ENCODE measurements at regions of chr14 and their contacts with region 1.

Region 1: DNA sequence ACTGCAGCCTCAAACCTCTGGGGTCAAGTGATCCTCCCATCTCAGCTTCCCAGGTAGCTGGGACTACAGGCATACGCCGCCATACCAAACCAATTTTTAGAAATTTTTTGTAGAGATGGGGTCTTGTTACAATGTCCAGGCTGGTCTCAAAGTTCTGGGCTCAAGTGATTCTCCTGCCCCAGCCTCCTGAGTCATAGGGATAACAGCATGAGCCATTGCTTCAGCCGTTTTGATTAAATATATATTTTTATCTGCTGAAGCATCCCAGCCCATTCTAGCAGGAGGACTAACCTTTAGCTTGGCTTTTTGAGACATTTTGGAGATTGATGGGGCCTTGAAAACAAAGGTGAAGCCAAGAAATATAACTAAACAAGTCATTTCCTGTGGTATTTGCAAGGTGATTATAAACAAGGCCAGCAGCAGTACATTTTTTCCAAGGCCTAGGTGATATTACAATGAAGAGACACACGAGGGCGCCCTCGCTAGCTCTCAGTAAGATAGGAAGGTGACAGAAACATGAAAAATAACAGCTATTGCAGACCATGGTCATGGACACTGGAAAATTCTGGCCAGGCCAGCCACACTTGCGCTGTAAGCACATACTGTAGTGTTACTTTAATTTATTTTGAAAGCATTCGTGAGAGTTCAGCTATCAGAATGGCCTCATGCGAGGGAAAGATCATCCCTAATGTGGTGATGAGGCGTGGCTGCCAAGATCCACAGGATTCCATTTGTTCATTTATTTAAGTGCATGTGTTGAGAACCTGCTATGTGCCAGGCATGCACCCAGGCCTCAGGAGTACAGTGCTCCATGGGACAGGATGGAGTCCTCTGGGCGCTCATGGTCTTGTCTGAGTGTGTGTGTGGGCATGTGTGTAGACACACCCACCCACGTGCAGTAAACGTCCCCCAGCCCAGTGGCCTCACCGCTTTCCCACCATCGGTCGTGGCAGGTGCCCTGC is 63.5 kb downstream of the DGLUCY start:
- DNase-seq: peak; percentile 64
- H3K4me3 Mint-ChIP-seq: no peak overlapping the region
- H3K27ac Mint-ChIP-seq: peak overlapping the region; percentile 86
- H3K4me1 Mint-ChIP-seq: peaks cover 35% of the 10 kb centered on the region
- H3K27me3 Mint-ChIP-seq: no peaks in the 10 kb centered on the region

Region 2: GRCh38 chr14:91021991-91022621 is 155.2 kb before region 1 on chr14:
- intact Hi-C with region 1: loop called (anchors 1 kb)
- DNase-seq: no peak
- H3K4me3 Mint-ChIP-seq: peak overlapping the region; percentile 76
- H3K27ac Mint-ChIP-seq: peak overlapping the region; percentile 94
- H3K4me1 Mint-ChIP-seq: peaks cover 83% of the 10 kb centered on the region
- H3K27me3 Mint-ChIP-seq: no peaks in the 10 kb centered on the region

Region 3: GRCh38 chr14:91193069-91193468 is 15.7 kb after region 1 on chr14:
- intact Hi-C with region 1: loop called (anchors 1 kb)
- DNase-seq: no peak
- H3K4me3 Mint-ChIP-seq: no peak overlapping the region
- H3K27ac Mint-ChIP-seq: no peak overlapping the region
- H3K4me1 Mint-ChIP-seq: peaks cover 43% of the 10 kb centered on the region
- H3K27me3 Mint-ChIP-seq: no peaks in the 10 kb centered on the region

Region 4: GRCh38 chr14:91264151-91265150 is 87.1 kb after region 1 on chr14:
- intact Hi-C with region 1: loop called (anchors 1 kb)
- DNase-seq: no peak
- H3K4me3 Mint-ChIP-seq: peak overlapping the region; percentile 72
- H3K27ac Mint-ChIP-seq: peak overlapping the region; percentile 45
- H3K4me1 Mint-ChIP-seq: peaks cover 70% of the 10 kb centered on the region
- H3K27me3 Mint-ChIP-seq: no peaks in the 10 kb centered on the region